Natural killer cell (primary cell): ENCODE measurements at regions of chr5 and their contacts with region 1.

Region 1: GRCh38 chr5:139633295-139634027 is 14.7 kb upstream of the CXXC5 start:
- DNase-seq: peak; percentile 72 to 89
- ATAC-seq: peak; percentile 17 to 55 (median 30)
- H3K4me3 ChIP-seq: no peak overlapping the region
- H3K4me3 Mint-ChIP-seq: no peak overlapping the region
- H3K27ac ChIP-seq: no peak overlapping the region
- H3K27ac Mint-ChIP-seq: peak overlapping the region; percentile 1 to 98
- H3K4me1 ChIP-seq: peaks cover 48% of the 10 kb centered on the region
- H3K4me1 Mint-ChIP-seq: peaks cover 33 to 45% of the 10 kb centered on the region in 2 donors
- H3K27me3 ChIP-seq: no peaks in the 10 kb centered on the region
- H3K27me3 Mint-ChIP-seq: no peaks in the 10 kb centered on the region
- CTCF ChIP-seq: peak; percentile 93

Region 2: GRCh38 chr5:139651853-139652787 is 18.7 kb after region 1 on chr5:
- intact Hi-C with region 1: loop called (anchors 1 kb)
- DNase-seq: peak; percentile 81 to 84
- ATAC-seq: peak; percentile 50 to 66 (median 64)
- H3K4me3 ChIP-seq: peak overlapping the region; percentile 73
- H3K4me3 Mint-ChIP-seq: peak overlapping the region; percentile 88
- H3K27ac ChIP-seq: peak overlapping the region; percentile 85
- H3K27ac Mint-ChIP-seq: peak overlapping the region; percentile 91 to 94
- H3K4me1 ChIP-seq: peaks cover 85% of the 10 kb centered on the region
- H3K4me1 Mint-ChIP-seq: peaks cover 66 to 84% of the 10 kb centered on the region in 2 donors
- H3K27me3 ChIP-seq: no peaks in the 10 kb centered on the region
- H3K27me3 Mint-ChIP-seq: no peaks in the 10 kb centered on the region
- CTCF ChIP-seq: no peak

Region 3: DNA sequence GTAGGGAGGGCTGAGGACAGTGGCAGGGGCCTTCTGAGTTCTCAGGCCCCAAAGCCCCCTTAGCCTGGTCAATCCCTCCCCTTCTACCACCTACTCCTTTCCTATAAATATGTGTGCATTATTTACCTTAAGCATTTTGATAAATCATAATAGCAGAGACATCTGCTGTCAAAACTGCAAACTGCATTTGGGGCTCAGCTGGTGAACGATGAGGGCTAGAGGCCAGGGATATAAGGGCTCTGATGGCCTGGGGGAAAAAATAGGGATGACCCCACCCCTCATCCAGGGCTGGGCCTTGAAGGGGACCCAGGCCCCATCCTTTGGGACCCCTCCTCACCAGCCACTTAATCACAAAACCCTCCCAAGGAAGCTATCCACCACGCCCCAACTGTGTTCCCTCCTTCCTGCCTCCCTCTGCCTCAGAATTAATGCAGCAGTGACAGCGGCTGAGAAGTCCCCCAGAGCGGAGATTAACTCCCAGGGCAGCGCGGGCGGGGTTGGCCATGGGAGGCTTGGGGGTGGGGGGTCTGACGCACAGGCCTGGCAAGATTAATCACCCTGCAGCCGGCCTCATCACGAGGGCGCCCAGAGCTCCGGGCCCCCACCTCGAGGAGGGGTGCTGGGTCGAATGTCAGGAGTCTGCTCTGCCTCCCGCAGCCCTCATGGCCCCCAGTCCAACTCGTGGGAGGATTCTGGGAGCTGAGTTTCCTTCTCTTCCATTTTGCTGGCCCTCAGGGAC is 56.8 kb after region 1 on chr5:
- intact Hi-C with region 1: loop called (anchors 1 kb)
- DNase-seq: peak in 1 of 2 donors; percentile 63
- ATAC-seq: peak in 2 of 3 donors; percentile 67 to 70
- H3K4me3 ChIP-seq: no peak overlapping the region
- H3K4me3 Mint-ChIP-seq: peak overlapping the region; percentile 4
- H3K27ac ChIP-seq: peak overlapping the region; percentile 40
- H3K27ac Mint-ChIP-seq: peak overlapping the region; percentile 45 to 88
- H3K4me1 ChIP-seq: peaks cover 53% of the 10 kb centered on the region
- H3K4me1 Mint-ChIP-seq: peaks cover 22 to 45% of the 10 kb centered on the region in 2 donors
- H3K27me3 ChIP-seq: no peaks in the 10 kb centered on the region
- H3K27me3 Mint-ChIP-seq: no peaks in the 10 kb centered on the region
- CTCF ChIP-seq: peak; percentile 68

Region 4: GRCh38 chr5:139745800-139746690 is 112.6 kb after region 1 on chr5:
- intact Hi-C with region 1: loop called (anchors 1 kb)
- DNase-seq: peak; percentile 66 to 79
- ATAC-seq: peak; percentile 39 to 50 (median 48)
- H3K4me3 ChIP-seq: peak overlapping the region; percentile 59
- H3K4me3 Mint-ChIP-seq: peak overlapping the region; percentile 94
- H3K27ac ChIP-seq: peak overlapping the region; percentile 99
- H3K27ac Mint-ChIP-seq: peak overlapping the region; percentile 94 to 98
- H3K4me1 ChIP-seq: peaks cover 48% of the 10 kb centered on the region
- H3K4me1 Mint-ChIP-seq: peaks cover 38 to 66% of the 10 kb centered on the region in 2 donors
- H3K27me3 ChIP-seq: no peaks in the 10 kb centered on the region
- H3K27me3 Mint-ChIP-seq: no peaks in the 10 kb centered on the region
- CTCF ChIP-seq: no peak

Region 5: DNA sequence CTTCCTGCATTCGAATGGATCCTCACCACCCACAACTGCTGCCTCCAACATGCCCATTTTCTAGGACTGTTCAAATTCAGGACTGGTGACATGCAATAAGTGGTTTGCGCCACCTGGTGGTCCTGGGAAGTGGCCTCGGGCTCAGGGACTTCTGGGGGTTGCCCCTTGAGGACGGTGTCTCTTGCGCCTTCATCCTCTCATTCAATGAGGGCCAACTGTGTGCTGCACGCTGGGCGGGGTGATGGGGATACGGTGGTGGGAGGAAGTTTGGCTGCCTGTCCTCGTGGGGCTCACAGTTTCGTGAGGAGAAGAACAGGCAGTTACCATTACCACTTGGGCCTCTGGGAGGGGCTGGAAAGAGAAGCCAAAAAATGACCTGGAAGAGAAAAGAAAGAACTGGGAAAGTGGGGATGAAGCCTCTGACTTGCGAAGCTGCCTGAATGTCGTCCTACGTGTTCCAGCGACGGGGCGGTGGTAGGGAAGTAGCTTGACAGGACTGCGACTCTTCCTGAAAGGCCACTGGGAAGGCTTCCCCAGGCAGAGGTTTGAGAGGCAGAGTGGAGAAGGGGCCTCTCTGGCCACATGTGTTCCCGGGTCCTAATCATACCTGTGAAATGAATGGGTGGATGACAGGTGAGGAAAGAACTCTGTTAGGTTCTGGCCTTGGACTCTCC is 211.1 kb after region 1 on chr5:
- intact Hi-C with region 1: loop called (anchors 10 kb)
- DNase-seq: peak; percentile 63 to 83
- ATAC-seq: no peak
- H3K4me3 ChIP-seq: no peak overlapping the region
- H3K4me3 Mint-ChIP-seq: peak overlapping the region; percentile 21
- H3K27ac ChIP-seq: no peak overlapping the region
- H3K27ac Mint-ChIP-seq: no peak overlapping the region
- H3K4me1 ChIP-seq: peaks cover 14% of the 10 kb centered on the region
- H3K4me1 Mint-ChIP-seq: peaks cover 11 to 21% of the 10 kb centered on the region in 2 donors
- H3K27me3 ChIP-seq: peaks cover 4% of the 10 kb centered on the region
- H3K27me3 Mint-ChIP-seq: peaks cover 0 to 2% of the 10 kb centered on the region in 2 donors
- CTCF ChIP-seq: peak; percentile 65

Region 6: GRCh38 chr5:140054086-140054689 is 420.7 kb after region 1 on chr5:
- intact Hi-C with region 1: no loop called
- DNase-seq: no peak
- ATAC-seq: no peak
- H3K4me3 ChIP-seq: no peak overlapping the region
- H3K4me3 Mint-ChIP-seq: no peak overlapping the region
- H3K27ac ChIP-seq: no peak overlapping the region
- H3K27ac Mint-ChIP-seq: no peak overlapping the region
- H3K4me1 ChIP-seq: no peaks in the 10 kb centered on the region
- H3K4me1 Mint-ChIP-seq: no peaks in the 10 kb centered on the region
- H3K27me3 ChIP-seq: peaks cover 6% of the 10 kb centered on the region
- H3K27me3 Mint-ChIP-seq: peaks cover under 1 to 6% of the 10 kb centered on the region in 2 donors
- CTCF ChIP-seq: no peak